Psoas muscle (tissue), 8 donors: ENCODE measurements at regions of chr4 and their contacts with region 1.

Region 1: GRCh38 chr4:76515975-76516843 is 81.2 kb downstream of the SHROOM3 start:
- DNase-seq: no peak
- ATAC-seq: no peak
- H3K4me3 ChIP-seq: no peak overlapping the region
- H3K27ac ChIP-seq: no peak overlapping the region
- H3K4me1 ChIP-seq: no peaks in the 10 kb centered on the region
- H3K27me3 ChIP-seq: no peaks in the 10 kb centered on the region
- CTCF ChIP-seq: no peak

Region 2: GRCh38 chr4:76748649-76749048 is 232.4 kb after region 1 on chr4:
- intact Hi-C with region 1: loop called in 1 of 2 experiments (anchors 2 kb)
- DNase-seq: no peak
- ATAC-seq: no peak
- H3K4me3 ChIP-seq: no peak overlapping the region
- H3K27ac ChIP-seq: no peak overlapping the region
- H3K4me1 ChIP-seq: no peaks in the 10 kb centered on the region
- H3K27me3 ChIP-seq: no peaks in the 10 kb centered on the region
- CTCF ChIP-seq: no peak

Region 3: GRCh38 chr4:76758290-76758882 is 242.2 kb after region 1 on chr4:
- intact Hi-C with region 1: loop called (anchors 2 to 5 kb)
- DNase-seq: no peak
- ATAC-seq: peak; percentile 58 to 74 (median 63)
- H3K4me3 ChIP-seq: no peak overlapping the region
- H3K27ac ChIP-seq: no peak overlapping the region
- H3K4me1 ChIP-seq: no peaks in the 10 kb centered on the region
- H3K27me3 ChIP-seq: no peaks in the 10 kb centered on the region
- CTCF ChIP-seq: peak; percentile 76

Region 4: GRCh38 chr4:76781698-76782595 is 265.7 kb after region 1 on chr4:
- intact Hi-C with region 1: no loop called
- DNase-seq: no peak
- ATAC-seq: no peak
- H3K4me3 ChIP-seq: no peak overlapping the region
- H3K27ac ChIP-seq: no peak overlapping the region
- H3K4me1 ChIP-seq: no peaks in the 10 kb centered on the region
- H3K27me3 ChIP-seq: no peaks in the 10 kb centered on the region
- CTCF ChIP-seq: no peak

Region 5: GRCh38 chr4:77044461-77045150 is 528.4 kb after region 1 on chr4:
- intact Hi-C with region 1: loop called in 1 of 2 experiments (anchors 10 kb)
- DNase-seq: no peak
- ATAC-seq: peak in 3 of 4 donors; percentile 19 to 55 (median 44)
- H3K4me3 ChIP-seq: no peak overlapping the region
- H3K27ac ChIP-seq: no peak overlapping the region
- H3K4me1 ChIP-seq: peaks cover 17% of the 10 kb centered on the region
- H3K27me3 ChIP-seq: no peaks in the 10 kb centered on the region
- CTCF ChIP-seq: peak; percentile 52

Region 6: DNA sequence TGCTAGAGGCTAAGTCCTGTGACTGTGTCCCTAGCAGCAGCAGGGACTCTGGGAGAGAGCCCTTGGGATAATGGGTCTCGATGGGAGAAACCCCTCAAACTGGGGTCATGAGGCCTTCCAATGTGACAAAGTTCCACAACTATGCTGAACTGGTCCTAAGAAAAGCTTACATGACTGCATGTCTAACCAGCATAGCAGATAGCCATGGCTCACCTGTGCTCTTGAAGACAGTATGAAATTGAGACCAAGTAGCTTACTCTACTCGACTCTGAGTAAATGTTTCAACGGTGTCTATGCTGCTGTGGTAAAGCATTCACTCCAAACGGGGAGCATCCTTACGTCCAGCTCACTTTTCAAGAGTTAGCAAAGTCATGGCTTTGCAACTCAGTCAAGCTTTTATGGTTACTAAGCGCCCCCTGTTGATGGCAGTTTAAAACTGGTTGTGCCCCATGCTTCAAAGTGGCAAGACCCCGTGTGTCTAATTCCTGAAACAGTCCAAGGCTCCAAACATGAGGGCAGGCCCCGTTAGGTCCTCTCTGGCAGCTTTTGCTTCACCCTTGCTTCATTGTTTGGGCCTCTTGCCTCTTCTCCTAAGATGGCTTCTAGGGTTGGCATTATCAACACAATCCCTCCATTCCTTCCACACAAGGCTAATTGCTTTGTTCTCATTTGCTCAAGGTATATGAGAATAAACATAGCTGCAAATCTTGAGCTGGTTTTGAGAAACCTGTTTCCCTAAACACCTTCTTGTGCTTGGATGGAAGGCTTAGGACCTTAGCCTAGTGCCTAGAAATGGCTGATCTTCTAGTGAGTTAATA is 687.4 kb after region 1 on chr4:
- intact Hi-C with region 1: loop called (anchors 2 to 5 kb)
- DNase-seq: peak; percentile 26 to 58
- ATAC-seq: peak; percentile 76 to 92 (median 80)
- H3K4me3 ChIP-seq: no peak overlapping the region
- H3K27ac ChIP-seq: no peak overlapping the region
- H3K4me1 ChIP-seq: no peaks in the 10 kb centered on the region
- H3K27me3 ChIP-seq: no peaks in the 10 kb centered on the region
- CTCF ChIP-seq: peak; percentile 74

Region 7: DNA sequence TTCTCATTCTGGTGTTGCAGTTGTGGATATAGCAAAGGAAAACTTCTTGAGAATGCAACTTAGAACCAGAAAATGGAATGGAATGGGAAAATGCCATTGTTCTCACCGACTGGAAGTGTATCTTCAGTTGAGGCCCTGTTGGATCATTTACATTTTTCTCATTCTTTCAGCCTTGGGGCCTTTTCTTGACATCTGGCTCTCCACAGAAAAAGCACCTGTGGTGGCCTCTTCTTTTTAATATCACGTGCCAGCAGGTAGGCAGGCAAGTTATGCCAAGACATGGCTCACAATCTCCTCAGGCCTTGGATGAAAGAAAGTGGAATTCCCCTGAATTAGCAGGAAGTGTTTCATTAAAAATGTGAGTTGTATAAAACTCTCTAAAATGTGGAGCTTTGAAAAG is 1662.9 kb after region 1 on chr4:
- intact Hi-C with region 1: no loop called
- DNase-seq: no peak
- ATAC-seq: no peak
- H3K4me3 ChIP-seq: no peak overlapping the region
- H3K27ac ChIP-seq: no peak overlapping the region
- H3K4me1 ChIP-seq: no peaks in the 10 kb centered on the region
- H3K27me3 ChIP-seq: no peaks in the 10 kb centered on the region
- CTCF ChIP-seq: no peak